Activated T-helper 1 cell treated with anti-CD3 and anti-CD28 coated beads, Interleukin-12 subunit alpha, Interleukin-12 subunit beta, Interleukin-2, Interleukin-4 antibody, amounts not matched to agents 30 ng/mL and 10 ng/mL and 1 ng/mL, durations not matched to agents 14 hours and 24 hours and 36 hours (primary cell): ENCODE measurements at regions of chr6 and their contacts with region 1.

Region 1: DNA sequence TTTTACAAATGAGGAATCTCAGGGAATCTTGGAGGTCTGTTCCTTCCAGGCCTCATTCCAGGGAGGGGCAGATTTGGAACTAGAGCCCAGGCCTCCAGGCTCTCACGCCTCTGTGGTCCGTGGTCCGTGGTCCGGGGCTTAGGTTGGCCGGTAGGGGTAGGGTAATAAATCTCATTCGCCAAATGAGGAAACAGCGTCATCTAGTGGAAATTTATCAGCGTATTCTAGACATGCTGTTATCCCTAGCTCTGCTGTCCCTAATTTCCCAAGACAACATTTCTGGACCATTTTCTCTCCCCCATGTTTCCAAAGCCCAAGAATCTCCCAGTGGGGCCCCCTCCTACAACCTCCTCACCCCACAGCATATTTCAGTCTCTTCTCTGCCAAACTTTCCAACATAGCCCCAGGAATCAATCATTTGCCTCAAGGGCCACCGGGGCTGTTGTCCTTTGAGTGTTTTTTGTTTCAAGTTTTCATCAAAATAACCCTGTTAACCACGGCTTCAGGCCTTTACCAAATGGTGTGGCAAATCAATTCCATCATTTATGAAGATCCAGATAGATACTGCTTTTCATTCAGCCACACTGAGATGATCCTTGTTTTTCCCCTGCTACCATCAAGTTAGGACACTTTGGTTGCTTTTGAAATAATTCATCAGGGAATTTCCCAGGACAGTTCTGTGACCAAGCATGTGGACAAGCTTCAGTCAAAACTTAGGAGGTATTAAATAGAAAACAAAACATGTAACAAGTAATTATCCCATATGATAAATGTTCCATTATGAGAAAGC is 126.8 kb downstream of the ALDH8A1 start:
- DNase-seq: peak; percentile 1
- H3K4me3 Mint-ChIP-seq: no peak overlapping the region
- H3K27ac Mint-ChIP-seq: no peak overlapping the region
- H3K4me1 Mint-ChIP-seq: no peaks in the 10 kb centered on the region
- H3K27me3 Mint-ChIP-seq: peaks cover 2% of the 10 kb centered on the region

Region 2: GRCh38 chr6:134123666-134124208 is 699.4 kb before region 1 on chr6:
- intact Hi-C with region 1: loop called (anchors 1 kb)
- DNase-seq: no peak
- H3K4me3 Mint-ChIP-seq: no peak overlapping the region
- H3K27ac Mint-ChIP-seq: no peak overlapping the region
- H3K4me1 Mint-ChIP-seq: no peaks in the 10 kb centered on the region
- H3K27me3 Mint-ChIP-seq: peaks cover 3% of the 10 kb centered on the region

Region 3: GRCh38 chr6:134247231-134247833 is 575.8 kb before region 1 on chr6:
- intact Hi-C with region 1: loop called (anchors 1 kb)
- DNase-seq: peak; percentile 82
- H3K4me3 Mint-ChIP-seq: peak overlapping the region; percentile 37
- H3K27ac Mint-ChIP-seq: peak overlapping the region; percentile 91
- H3K4me1 Mint-ChIP-seq: peaks cover 58% of the 10 kb centered on the region
- H3K27me3 Mint-ChIP-seq: no peaks in the 10 kb centered on the region

Region 4: GRCh38 chr6:134373282-134373922 is 449.7 kb before region 1 on chr6:
- intact Hi-C with region 1: no loop called
- DNase-seq: no peak
- H3K4me3 Mint-ChIP-seq: peak overlapping the region; percentile 47
- H3K27ac Mint-ChIP-seq: peak overlapping the region; percentile 57
- H3K4me1 Mint-ChIP-seq: peaks cover 46% of the 10 kb centered on the region
- H3K27me3 Mint-ChIP-seq: no peaks in the 10 kb centered on the region

Region 5: GRCh38 chr6:134640975-134641429 is 182.1 kb before region 1 on chr6:
- intact Hi-C with region 1: loop called (anchors 1 kb)
- DNase-seq: peak; percentile 65
- H3K4me3 Mint-ChIP-seq: no peak overlapping the region
- H3K27ac Mint-ChIP-seq: no peak overlapping the region
- H3K4me1 Mint-ChIP-seq: peaks cover 33% of the 10 kb centered on the region
- H3K27me3 Mint-ChIP-seq: no peaks in the 10 kb centered on the region

Region 6: DNA sequence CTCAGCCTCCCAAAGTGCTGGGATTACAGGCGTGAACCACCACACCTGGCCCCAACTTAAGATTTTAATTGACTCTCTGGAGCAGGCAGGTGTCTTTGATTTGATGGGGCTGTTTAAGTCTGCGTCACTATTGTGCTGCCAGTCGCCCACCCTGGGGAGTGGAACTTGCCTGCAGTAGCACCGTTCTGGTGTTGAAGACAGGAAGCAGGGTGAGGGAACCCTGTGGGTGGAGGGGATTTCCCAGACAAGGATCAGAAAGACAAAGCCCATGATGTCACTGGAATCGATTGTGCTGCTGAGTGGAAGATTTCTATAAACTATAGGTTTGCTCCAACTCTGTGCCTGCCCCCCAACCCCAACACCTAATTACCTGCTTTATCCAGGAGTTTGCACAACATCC is 115.8 kb after region 1 on chr6:
- intact Hi-C with region 1: loop called (anchors 1 kb)
- DNase-seq: peak; percentile 41
- H3K4me3 Mint-ChIP-seq: no peak overlapping the region
- H3K27ac Mint-ChIP-seq: peak overlapping the region; percentile 5
- H3K4me1 Mint-ChIP-seq: peaks cover 39% of the 10 kb centered on the region
- H3K27me3 Mint-ChIP-seq: no peaks in the 10 kb centered on the region